ENCODE measurements at regions of chr2 and their contacts with region 1.

Region 1: DNA sequence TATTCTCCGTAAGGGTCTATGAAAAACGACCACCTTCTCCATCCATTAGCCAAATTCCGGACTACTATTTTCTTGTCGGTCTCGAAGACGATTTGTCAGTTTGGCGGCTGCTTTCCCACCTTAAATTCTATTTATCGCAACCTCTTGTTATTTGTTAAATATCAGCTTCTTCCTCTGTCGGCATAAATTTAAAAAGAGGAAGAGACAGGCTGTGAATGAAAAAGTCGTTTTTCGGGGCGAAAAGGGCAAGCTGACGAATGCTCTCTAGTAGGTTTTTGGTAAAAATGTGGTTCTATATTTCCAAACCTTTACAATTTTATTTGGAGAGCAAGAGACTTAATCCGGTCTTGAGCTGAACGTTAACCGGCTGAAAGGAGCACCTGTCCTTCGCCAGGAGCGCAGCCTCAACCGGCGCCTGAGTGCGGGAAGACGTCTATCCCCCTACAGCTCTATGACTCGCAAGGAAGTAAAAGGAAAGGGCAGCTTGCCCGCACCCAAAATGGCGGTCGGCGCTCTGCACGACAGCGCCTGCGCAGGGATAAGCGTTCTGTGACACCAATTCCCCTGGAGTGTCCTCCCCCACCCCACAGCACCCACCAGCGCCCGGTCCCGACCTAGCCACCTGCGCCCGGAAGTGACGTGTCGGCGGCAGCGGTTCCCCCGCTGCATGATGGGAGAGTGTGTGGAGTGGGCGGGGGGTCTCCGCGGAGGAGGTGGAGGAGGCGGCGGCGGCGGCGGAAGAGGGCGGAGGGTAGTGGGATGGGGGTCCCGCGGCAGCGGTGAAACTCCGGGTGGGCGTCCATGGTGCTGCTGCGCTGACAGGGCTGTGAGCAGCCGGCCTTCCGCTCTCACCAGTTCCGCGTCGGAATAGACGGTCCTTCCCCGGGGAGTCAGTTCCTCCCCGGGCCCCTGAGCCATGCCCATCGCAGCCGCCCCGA is at the start of gene AFTPH:
- DNase-seq: peak; percentile 100
- H3K4me3 Mint-ChIP-seq: peak within 1 kb of the TSS; percentile 99
- H3K27ac Mint-ChIP-seq: peak within 1 kb of the TSS; percentile 100
- H3K4me1 Mint-ChIP-seq: peaks cover 39% of the 10 kb centered on the region
- H3K27me3 Mint-ChIP-seq: peaks cover 2% of the 10 kb centered on the region
- total RNA-seq, gene AFTPH: 42.4 and 43.4 TPM in 2 replicates

Region 2: GRCh38 chr2:63588385-63589147 is 935.4 kb before region 1 on chr2 and contains the starts of genes MDH1 and WDPCP:
- intact Hi-C with region 1: loop called (anchors 1 kb)
- DNase-seq: peak; percentile 90
- H3K4me3 Mint-ChIP-seq: peak within 1 kb of the TSS; percentile 97
- H3K27ac Mint-ChIP-seq: peak within 1 kb of the TSS; percentile 90
- H3K4me1 Mint-ChIP-seq: peaks cover 38% of the 10 kb centered on the region
- H3K27me3 Mint-ChIP-seq: no peaks in the 10 kb centered on the region
- total RNA-seq, gene MDH1: 186 and 197 TPM in 2 replicates
- total RNA-seq, gene WDPCP: 5.2 and 7.7 TPM in 2 replicates

Region 3: DNA sequence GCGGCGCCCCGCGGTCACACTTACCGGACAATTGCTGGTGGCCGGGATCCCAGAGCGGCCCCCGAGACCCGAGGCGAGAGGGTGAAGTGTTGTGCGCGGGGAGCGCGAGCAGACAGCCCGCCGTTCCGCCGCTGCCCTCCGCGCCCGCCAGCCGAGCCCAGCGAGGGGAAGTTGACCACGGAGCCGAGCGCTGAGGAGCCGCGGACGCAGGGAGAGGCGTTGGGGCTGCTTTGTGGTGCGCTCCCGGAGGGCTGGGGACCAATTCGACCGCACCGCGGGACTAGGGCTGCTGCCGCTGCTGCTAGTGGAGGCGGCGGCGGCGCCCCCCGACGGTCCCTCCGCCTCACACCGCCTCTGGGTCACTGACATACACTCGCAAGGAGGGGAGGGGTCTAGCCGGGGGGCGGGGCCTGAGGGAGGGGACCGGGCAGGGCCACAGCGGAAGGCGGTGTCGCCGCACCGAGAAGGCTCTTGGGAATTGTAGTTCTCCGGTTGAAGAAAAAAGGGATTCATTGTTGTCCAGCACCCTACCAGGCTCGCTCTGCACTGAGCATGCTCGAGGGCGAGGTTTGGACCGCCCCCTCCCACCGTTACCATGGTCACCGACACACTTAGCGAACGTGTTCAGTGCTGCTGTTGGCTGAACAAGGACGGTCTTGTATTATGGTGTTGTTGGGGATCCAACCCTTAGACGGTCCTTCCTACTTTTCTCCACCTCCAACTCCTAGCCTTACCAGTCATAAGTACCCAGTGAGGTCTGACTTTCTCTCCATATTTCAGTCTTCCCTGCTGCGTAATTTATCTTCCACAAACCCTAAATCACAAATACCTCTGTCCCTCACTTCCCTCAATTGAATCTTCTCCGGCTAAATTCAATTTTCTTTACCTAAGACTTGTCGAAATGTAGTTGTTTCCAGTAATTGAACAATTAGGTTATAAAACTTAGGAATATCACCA is 379.6 kb before region 1 on chr2 and contains the start of gene PELI1:
- intact Hi-C with region 1: loop called (anchors 2 kb)
- DNase-seq: peak; percentile 90
- H3K4me3 Mint-ChIP-seq: peak within 1 kb of the TSS; percentile 98
- H3K27ac Mint-ChIP-seq: peak within 1 kb of the TSS; percentile 97
- H3K4me1 Mint-ChIP-seq: peaks cover 28% of the 10 kb centered on the region
- H3K27me3 Mint-ChIP-seq: peaks cover 3% of the 10 kb centered on the region
- total RNA-seq, gene PELI1: 47.1 and 50.4 TPM in 2 replicates

Region 4: GRCh38 chr2:64586883-64587481 is 63.0 kb after region 1 on chr2:
- intact Hi-C with region 1: loop called (anchors 1 kb)
- DNase-seq: no peak
- H3K4me3 Mint-ChIP-seq: no peak overlapping the region
- H3K27ac Mint-ChIP-seq: no peak overlapping the region
- H3K4me1 Mint-ChIP-seq: peaks cover 17% of the 10 kb centered on the region
- H3K27me3 Mint-ChIP-seq: no peaks in the 10 kb centered on the region

Region 5: DNA sequence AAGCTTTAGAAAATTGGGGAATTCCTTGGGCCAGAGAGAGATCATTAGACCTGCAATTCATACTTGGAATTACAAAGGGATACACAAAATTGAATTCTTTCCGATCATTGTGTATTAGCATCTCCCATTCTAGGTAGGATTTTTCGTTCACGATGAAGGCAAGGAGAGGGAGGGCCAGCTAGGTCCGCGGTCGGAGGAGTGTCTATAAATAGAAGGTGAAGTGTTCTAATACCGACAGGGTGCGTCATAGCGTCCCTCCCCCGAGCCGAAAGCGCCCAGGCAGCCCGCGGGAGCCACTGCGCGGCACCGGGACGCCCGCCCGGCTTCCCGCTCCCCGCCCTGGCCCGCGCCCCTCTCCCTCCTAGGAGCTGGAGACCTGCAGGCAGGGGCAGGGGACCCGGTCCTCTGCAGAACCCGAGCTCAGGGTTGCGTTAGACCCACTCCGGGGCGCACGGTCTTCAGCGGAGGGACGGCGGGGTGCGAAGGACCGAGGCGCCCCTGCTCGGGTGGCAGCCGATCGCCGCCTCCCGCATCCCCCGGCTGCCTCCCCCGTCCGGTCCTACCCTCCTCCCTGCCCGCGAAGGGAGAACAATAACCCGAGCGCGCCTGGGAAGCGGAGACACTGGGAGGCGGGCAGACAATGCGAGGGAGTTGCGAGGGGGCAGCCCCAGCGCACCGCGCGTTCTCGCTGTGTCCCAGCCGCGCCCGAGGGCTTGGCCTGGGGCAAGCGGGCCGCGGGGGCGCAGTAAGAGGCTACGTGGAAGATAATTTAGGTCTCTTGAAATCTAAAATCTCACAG is 243.9 kb after region 1 on chr2:
- intact Hi-C with region 1: loop called (anchors 1 kb)
- DNase-seq: peak; percentile 69
- H3K4me3 Mint-ChIP-seq: peak overlapping the region; percentile 91
- H3K27ac Mint-ChIP-seq: peak overlapping the region; percentile 95
- H3K4me1 Mint-ChIP-seq: peaks cover 47% of the 10 kb centered on the region
- H3K27me3 Mint-ChIP-seq: no peaks in the 10 kb centered on the region

Region 6: GRCh38 chr2:65040400-65041261 is 516.7 kb after region 1 on chr2:
- intact Hi-C with region 1: loop called (anchors 5 kb)
- DNase-seq: peak; percentile 67
- H3K4me3 Mint-ChIP-seq: no peak overlapping the region
- H3K27ac Mint-ChIP-seq: no peak overlapping the region
- H3K4me1 Mint-ChIP-seq: peaks cover 25% of the 10 kb centered on the region
- H3K27me3 Mint-ChIP-seq: no peaks in the 10 kb centered on the region

Measured in activated T-helper 1 cell treated with anti-CD3 and anti-CD28 coated beads, Interleukin-12 subunit alpha, Interleukin-12 subunit beta, Interleukin-2, Interleukin-4 antibody, amounts not matched to agents 30 ng/mL and 10 ng/mL and 1 ng/mL, durations not matched to agents 14 hours and 24 hours and 36 hours (primary cell).